Activated B cell treated with CpG ODN at 0.5 μM for 24 hours (primary cell): ENCODE measurements at regions of chr4 and their contacts with region 1.

Region 1: GRCh38 chr4:184745831-184746795 is 12.2 kb upstream of the CENPU start:
- DNase-seq: peak; percentile 35
- ATAC-seq: peak; percentile 88
- H3K4me3 Mint-ChIP-seq: peak overlapping the region; percentile 5
- H3K27ac Mint-ChIP-seq: no peak overlapping the region
- H3K4me1 Mint-ChIP-seq: peaks cover 10% of the 10 kb centered on the region
- H3K27me3 Mint-ChIP-seq: no peaks in the 10 kb centered on the region
- CTCF ChIP-seq: no peak

Region 2: GRCh38 chr4:184417802-184418511 is 328.2 kb before region 1 on chr4:
- CTCF ChIA-PET with region 1: no interaction called
- POLR2A ChIA-PET with region 1: no interaction called
- intact Hi-C with region 1: no loop called
- DNase-seq: no peak
- ATAC-seq: peak; percentile 65
- H3K4me3 Mint-ChIP-seq: peak overlapping the region; percentile 55
- H3K27ac Mint-ChIP-seq: peak overlapping the region; percentile 89
- H3K4me1 Mint-ChIP-seq: peaks cover 81% of the 10 kb centered on the region
- H3K27me3 Mint-ChIP-seq: no peaks in the 10 kb centered on the region
- CTCF ChIP-seq: no peak

Region 3: DNA sequence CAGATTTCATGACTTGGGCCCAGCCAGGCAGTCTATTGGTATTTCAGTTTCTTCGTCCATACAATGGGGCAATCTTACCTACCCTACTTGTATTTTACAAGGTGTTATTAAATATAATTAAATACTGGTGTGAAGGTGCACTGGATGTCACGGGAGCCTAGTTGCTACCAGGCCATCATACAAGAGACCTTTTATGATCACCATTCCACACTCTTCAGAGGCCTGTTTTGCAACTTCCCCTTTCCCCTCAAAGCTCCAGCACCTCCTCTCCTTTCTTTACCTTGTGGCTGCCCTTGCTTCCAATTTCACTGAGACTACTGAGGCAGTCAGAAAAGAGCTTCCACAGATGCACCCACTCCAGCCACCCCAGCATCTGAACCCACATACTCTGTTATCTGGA is 178.4 kb after region 1 on chr4:
- CTCF ChIA-PET with region 1: interaction called, 4 read pairs
- POLR2A ChIA-PET with region 1: no interaction called
- intact Hi-C with region 1: loop called (anchors 1 kb)
- DNase-seq: no peak
- ATAC-seq: no peak
- H3K4me3 Mint-ChIP-seq: no peak overlapping the region
- H3K27ac Mint-ChIP-seq: no peak overlapping the region
- H3K4me1 Mint-ChIP-seq: no peaks in the 10 kb centered on the region
- H3K27me3 Mint-ChIP-seq: no peaks in the 10 kb centered on the region
- CTCF ChIP-seq: no peak

Region 4: DNA sequence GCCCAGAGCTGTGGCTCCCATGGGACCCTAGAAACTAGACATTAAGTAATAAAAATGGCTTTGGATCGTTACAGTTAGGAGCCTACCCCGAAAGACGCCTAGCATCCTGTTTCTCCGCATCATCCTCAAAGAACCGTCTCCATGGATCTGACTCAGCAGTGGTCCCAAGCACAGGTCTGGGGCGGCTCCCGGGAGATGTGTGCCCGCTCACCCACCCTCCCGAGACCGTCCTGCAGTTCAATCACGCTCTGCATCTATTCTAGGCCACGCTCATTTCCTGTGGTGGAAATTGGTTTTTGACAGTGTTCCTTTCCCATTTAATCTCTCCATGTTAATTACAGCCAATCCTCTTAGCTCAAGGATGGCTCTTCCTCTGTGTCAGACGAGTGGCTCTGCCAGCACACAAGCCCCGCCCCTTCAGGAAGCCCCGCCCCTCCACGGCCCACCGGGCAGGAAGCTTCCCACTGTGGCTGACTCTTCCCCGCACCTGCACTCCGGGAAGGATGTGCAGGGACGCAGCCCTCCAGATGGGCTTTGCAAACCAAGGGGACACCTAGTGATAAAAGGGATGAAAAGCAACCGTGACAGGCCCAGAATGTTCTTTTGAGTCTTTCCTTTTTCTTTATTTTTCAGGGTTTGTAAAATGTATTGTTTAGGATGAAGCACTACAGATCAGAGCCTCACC is 237.7 kb after region 1 on chr4:
- CTCF ChIA-PET with region 1: interaction called, 19 read pairs
- POLR2A ChIA-PET with region 1: no interaction called
- intact Hi-C with region 1: loop called (anchors 1 kb)
- DNase-seq: peak; percentile 61
- ATAC-seq: peak; percentile 89
- H3K4me3 Mint-ChIP-seq: no peak overlapping the region
- H3K27ac Mint-ChIP-seq: no peak overlapping the region
- H3K4me1 Mint-ChIP-seq: no peaks in the 10 kb centered on the region
- H3K27me3 Mint-ChIP-seq: peaks cover 3% of the 10 kb centered on the region
- CTCF ChIP-seq: no peak

Region 5: GRCh38 chr4:185011408-185011807 is 265.3 kb after region 1 on chr4:
- CTCF ChIA-PET with region 1: interaction called, 15 read pairs
- POLR2A ChIA-PET with region 1: no interaction called
- intact Hi-C with region 1: loop called (anchors 1 kb)
- DNase-seq: no peak
- ATAC-seq: no peak
- H3K4me3 Mint-ChIP-seq: no peak overlapping the region
- H3K27ac Mint-ChIP-seq: no peak overlapping the region
- H3K4me1 Mint-ChIP-seq: peaks cover 3% of the 10 kb centered on the region
- H3K27me3 Mint-ChIP-seq: peaks cover 67% of the 10 kb centered on the region
- CTCF ChIP-seq: no peak

Region 6: GRCh38 chr4:185134307-185134869 is 388.3 kb after region 1 on chr4:
- CTCF ChIA-PET with region 1: interaction called, 17 read pairs
- POLR2A ChIA-PET with region 1: no interaction called
- intact Hi-C with region 1: loop called (anchors 1 kb)
- DNase-seq: no peak
- ATAC-seq: peak; percentile 56
- H3K4me3 Mint-ChIP-seq: no peak overlapping the region
- H3K27ac Mint-ChIP-seq: no peak overlapping the region
- H3K4me1 Mint-ChIP-seq: no peaks in the 10 kb centered on the region
- H3K27me3 Mint-ChIP-seq: peaks cover 9% of the 10 kb centered on the region
- CTCF ChIP-seq: no peak

Region 7: DNA sequence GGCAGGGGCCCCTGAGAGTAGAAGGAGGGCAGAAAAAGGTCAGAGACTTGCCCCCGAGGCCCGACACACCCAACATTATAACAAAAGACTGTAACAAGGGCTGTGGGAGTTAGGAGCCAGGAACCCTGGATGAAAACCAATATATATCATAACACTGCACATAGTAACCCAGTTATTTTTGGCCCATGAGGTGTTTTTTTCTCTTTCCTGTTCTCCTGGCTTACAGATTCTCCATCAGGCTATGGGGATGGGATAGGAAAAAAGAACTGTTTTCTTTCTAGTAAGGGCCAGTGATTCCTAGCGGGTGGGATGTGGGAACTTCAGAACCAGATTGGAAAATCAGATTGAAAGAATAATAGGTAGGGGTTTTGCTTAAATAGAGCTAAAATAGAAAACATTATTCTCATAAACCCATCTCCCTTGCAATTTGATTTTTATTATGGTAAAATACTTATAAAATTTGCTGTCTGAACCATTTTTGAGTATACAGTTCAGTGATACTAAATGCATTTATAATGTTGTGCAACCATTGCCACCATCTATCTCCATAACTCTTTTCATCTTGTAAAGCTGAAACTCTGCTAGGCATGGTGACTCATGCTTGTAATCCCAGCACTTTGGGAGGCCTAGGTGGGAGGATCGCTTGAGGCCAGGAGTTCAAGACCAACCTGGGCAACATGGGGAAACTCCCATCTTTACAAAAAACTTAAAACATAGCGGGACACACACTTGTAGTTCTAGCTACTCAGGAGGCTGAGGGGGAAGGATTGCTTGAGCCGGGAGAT is 496.8 kb after region 1 on chr4:
- CTCF ChIA-PET with region 1: no interaction called
- POLR2A ChIA-PET with region 1: no interaction called
- intact Hi-C with region 1: no loop called
- DNase-seq: no peak
- ATAC-seq: no peak
- H3K4me3 Mint-ChIP-seq: no peak overlapping the region
- H3K27ac Mint-ChIP-seq: peak overlapping the region; percentile 59
- H3K4me1 Mint-ChIP-seq: peaks cover 31% of the 10 kb centered on the region
- H3K27me3 Mint-ChIP-seq: no peaks in the 10 kb centered on the region
- CTCF ChIP-seq: no peak